GM12878 (cell line): ENCODE measurements at regions of chr7 and their contacts with region 1.

Region 1: GRCh38 chr7:89622838-89623672 is 531.2 kb upstream of the STEAP1 start:
- DNase-seq: peak; percentile 3
- ATAC-seq: peak; percentile 93
- H3K4me3 ChIP-seq: no peak overlapping the region
- H3K27ac ChIP-seq: no peak overlapping the region
- H3K4me1 ChIP-seq: no peaks in the 10 kb centered on the region
- H3K27me3 ChIP-seq: no peaks in the 10 kb centered on the region
- CTCF ChIP-seq: peak; percentile 69 to 80 (median 79)
- EP300 ChIP-seq: no peak
- POLR2A ChIP-seq: no peak
- RAD21 ChIP-seq: peak; percentile 79

Region 2: GRCh38 chr7:88789480-88790064 is 833.5 kb before region 1 on chr7:
- CTCF ChIA-PET with region 1: interaction called, 6 read pairs
- POLR2A ChIA-PET with region 1: no interaction called
- RAD21 ChIA-PET with region 1: interaction called, 3 read pairs
- SMC1A ChIA-PET with region 1: no interaction called
- in situ Hi-C with region 1: no loop called
- intact Hi-C with region 1: loop called (anchors 10 kb)
- DNase-seq: no peak
- ATAC-seq: peak; percentile 66
- H3K4me3 ChIP-seq: no peak overlapping the region
- H3K27ac ChIP-seq: no peak overlapping the region
- H3K4me1 ChIP-seq: no peaks in the 10 kb centered on the region
- H3K27me3 ChIP-seq: no peaks in the 10 kb centered on the region
- CTCF ChIP-seq: peak in 2 of 3 experiments; percentile 15 to 30; a peak in 1 of 6 replicates
- EP300 ChIP-seq: no peak
- POLR2A ChIP-seq: no peak
- RAD21 ChIP-seq: 0 out of 2 replicates have a peak, but pooled peaks have one; percentile 21

Region 3: GRCh38 chr7:88967432-88967831 is 655.6 kb before region 1 on chr7:
- CTCF ChIA-PET with region 1: interaction called, 4 read pairs
- POLR2A ChIA-PET with region 1: no interaction called
- RAD21 ChIA-PET with region 1: no interaction called
- SMC1A ChIA-PET with region 1: no interaction called
- in situ Hi-C with region 1: no loop called
- intact Hi-C with region 1: loop called (anchors 10 kb)
- DNase-seq: no peak
- ATAC-seq: 0 out of 3 replicates have a peak, but pooled peaks have one; percentile 36
- H3K4me3 ChIP-seq: no peak overlapping the region
- H3K27ac ChIP-seq: no peak overlapping the region
- H3K4me1 ChIP-seq: no peaks in the 10 kb centered on the region
- H3K27me3 ChIP-seq: no peaks in the 10 kb centered on the region
- CTCF ChIP-seq: no peak
- EP300 ChIP-seq: no peak
- POLR2A ChIP-seq: no peak
- RAD21 ChIP-seq: no peak

Region 4: DNA sequence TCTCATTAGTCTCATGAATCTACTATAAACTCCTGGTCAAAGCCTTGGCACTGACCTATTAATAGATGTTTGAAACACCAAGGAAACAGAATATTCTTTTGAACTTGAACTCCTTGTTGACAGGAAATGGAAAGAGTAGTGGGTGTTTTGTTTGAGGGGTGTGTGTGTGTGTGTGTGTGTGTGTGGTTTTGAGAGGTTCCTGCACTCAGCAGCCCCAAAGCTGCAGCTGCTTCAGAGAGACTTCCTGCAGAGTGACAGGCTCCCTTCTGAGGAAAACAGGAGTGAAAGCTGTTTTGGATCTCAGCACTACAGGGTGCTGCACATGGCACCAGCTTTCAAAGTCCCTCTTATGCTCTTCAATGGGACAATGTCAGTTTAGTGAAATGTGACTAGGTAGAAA is 15.3 kb before region 1 on chr7:
- CTCF ChIA-PET with region 1: interaction called, 12 read pairs
- POLR2A ChIA-PET with region 1: no interaction called
- RAD21 ChIA-PET with region 1: no interaction called
- SMC1A ChIA-PET with region 1: no interaction called
- in situ Hi-C with region 1: no loop called
- intact Hi-C with region 1: no loop called
- DNase-seq: no peak
- ATAC-seq: no peak
- H3K4me3 ChIP-seq: no peak overlapping the region
- H3K27ac ChIP-seq: no peak overlapping the region
- H3K4me1 ChIP-seq: no peaks in the 10 kb centered on the region
- H3K27me3 ChIP-seq: no peaks in the 10 kb centered on the region
- CTCF ChIP-seq: no peak
- EP300 ChIP-seq: no peak
- POLR2A ChIP-seq: no peak
- RAD21 ChIP-seq: no peak

Region 5: GRCh38 chr7:90022213-90022612 is 399.2 kb after region 1 on chr7:
- CTCF ChIA-PET with region 1: no interaction called
- POLR2A ChIA-PET with region 1: no interaction called
- RAD21 ChIA-PET with region 1: no interaction called
- SMC1A ChIA-PET with region 1: no interaction called
- in situ Hi-C with region 1: no loop called
- intact Hi-C with region 1: no loop called
- DNase-seq: no peak
- ATAC-seq: no peak
- H3K4me3 ChIP-seq: no peak overlapping the region
- H3K27ac ChIP-seq: no peak overlapping the region
- H3K4me1 ChIP-seq: no peaks in the 10 kb centered on the region
- H3K27me3 ChIP-seq: no peaks in the 10 kb centered on the region
- CTCF ChIP-seq: no peak
- EP300 ChIP-seq: no peak
- POLR2A ChIP-seq: no peak
- RAD21 ChIP-seq: no peak